Activated CD8-positive, alpha-beta T cell treated with anti-CD3 and anti-CD28 coated beads for 36 hours (primary cell): ENCODE measurements at regions of chr15 and their contacts with region 1.

Region 1: GRCh38 chr15:85296615-85297402 is 83.6 kb upstream of the AKAP13 start:
- DNase-seq: peak; percentile 82
- ATAC-seq: peak; percentile 100
- H3K4me3 Mint-ChIP-seq: peak overlapping the region; percentile 36
- H3K27ac Mint-ChIP-seq: no peak overlapping the region
- H3K4me1 Mint-ChIP-seq: peaks cover 13% of the 10 kb centered on the region
- H3K27me3 Mint-ChIP-seq: no peaks in the 10 kb centered on the region
- CTCF ChIP-seq: peak; percentile 88

Region 2: GRCh38 chr15:84402856-84403608 is 893.8 kb before region 1 on chr15:
- CTCF ChIA-PET with region 1: no interaction called
- POLR2A ChIA-PET with region 1: no interaction called
- intact Hi-C with region 1: no loop called
- DNase-seq: no peak
- ATAC-seq: no peak
- H3K4me3 Mint-ChIP-seq: no peak overlapping the region
- H3K27ac Mint-ChIP-seq: no peak overlapping the region
- H3K4me1 Mint-ChIP-seq: no peaks in the 10 kb centered on the region
- H3K27me3 Mint-ChIP-seq: no peaks in the 10 kb centered on the region
- CTCF ChIP-seq: no peak

Region 3: GRCh38 chr15:85318048-85318731 is 21.4 kb after region 1 on chr15:
- CTCF ChIA-PET with region 1: interaction called, 21 read pairs
- POLR2A ChIA-PET with region 1: interaction called, 3 read pairs
- intact Hi-C with region 1: no loop called
- DNase-seq: peak; percentile 75
- ATAC-seq: peak; percentile 88
- H3K4me3 Mint-ChIP-seq: peak overlapping the region; percentile 12
- H3K27ac Mint-ChIP-seq: peak overlapping the region; percentile 85
- H3K4me1 Mint-ChIP-seq: peaks cover 54% of the 10 kb centered on the region
- H3K27me3 Mint-ChIP-seq: no peaks in the 10 kb centered on the region
- CTCF ChIP-seq: no peak

Region 4: DNA sequence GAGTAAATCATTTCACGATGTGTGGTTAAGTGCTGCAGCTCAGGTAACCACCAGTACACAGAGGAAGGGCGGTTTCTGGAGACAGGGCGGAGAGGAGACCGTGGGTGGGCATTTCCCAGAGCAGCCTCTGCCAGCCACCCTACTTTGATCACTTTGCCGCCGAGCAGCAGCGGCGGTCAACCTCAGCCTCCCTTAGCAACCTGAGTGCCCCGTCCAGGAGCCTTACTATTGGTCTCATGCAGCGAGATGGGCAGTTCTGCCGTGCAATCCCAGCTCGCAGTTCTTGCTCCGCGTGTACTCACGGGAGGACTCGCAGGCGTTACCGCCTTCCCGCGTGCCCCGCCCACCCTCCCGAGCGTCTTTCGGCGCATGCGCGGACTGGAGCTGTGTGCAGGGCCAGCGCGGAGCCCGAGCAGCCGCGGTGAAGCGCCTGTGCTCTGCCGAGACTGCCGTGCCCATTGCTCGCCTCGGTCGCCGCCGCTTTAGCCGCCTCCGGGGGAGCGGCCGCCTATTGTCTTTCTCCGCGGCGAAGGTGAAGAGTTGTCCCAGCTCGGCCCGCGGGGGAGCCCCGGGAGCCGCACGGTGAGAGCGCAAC is 83.5 kb after region 1 on chr15 and contains the start of gene AKAP13:
- CTCF ChIA-PET with region 1: interaction called, 11 read pairs
- POLR2A ChIA-PET with region 1: no interaction called
- intact Hi-C with region 1: no loop called
- DNase-seq: peak; percentile 98
- ATAC-seq: peak; percentile 89
- H3K4me3 Mint-ChIP-seq: peak within 1 kb of the TSS; percentile 83
- H3K27ac Mint-ChIP-seq: peak within 1 kb of the TSS; percentile 90
- H3K4me1 Mint-ChIP-seq: peaks cover 42% of the 10 kb centered on the region
- H3K27me3 Mint-ChIP-seq: no peaks in the 10 kb centered on the region
- CTCF ChIP-seq: no peak
- total RNA-seq, gene AKAP13: 79.1 to 79.5 TPM

Region 5: DNA sequence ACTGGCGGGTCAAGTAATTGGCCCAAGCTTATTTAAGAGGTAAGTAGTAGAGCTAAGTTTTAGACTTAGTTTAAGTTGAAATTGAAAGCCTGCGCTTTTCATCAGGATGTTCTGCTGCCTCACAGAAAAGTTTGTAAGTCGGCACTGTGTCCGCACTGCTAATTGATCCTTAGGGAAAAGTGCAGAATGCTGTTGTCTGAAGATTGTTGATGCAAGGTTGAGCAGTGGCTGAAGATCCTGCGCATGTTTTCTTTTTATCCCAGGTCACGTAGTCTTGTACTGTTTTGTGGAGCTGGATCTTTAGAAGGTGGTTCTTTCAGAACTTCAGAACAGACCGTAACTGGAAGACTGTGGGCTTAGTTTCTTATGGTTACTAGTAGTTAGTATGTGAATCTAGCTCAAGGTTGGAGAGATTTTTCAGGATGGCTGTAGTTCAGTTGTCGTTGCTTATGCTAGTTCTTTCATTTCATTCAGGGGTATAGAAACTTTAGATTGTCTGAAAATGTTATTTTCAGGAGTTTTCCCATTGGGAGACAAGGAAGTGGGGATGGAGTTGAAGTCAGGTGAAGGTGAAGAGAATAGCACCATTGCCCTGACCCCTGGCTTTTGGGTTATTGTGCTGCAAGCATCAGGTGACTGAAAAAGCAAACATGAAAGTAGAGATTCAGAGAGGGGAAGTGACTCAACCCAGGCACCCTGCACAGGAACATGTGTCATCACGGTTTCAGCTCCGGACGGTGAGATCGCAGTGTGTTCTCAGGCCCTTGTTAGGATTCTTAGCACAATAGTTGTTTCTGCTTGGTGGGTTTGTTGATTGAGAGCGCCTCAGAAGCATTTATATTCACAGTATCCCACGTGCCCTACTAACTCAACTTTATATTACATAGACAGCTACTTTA is 116.4 kb after region 1 on chr15:
- CTCF ChIA-PET with region 1: interaction called, 90 read pairs
- POLR2A ChIA-PET with region 1: no interaction called
- intact Hi-C with region 1: loop called (anchors 1 kb)
- DNase-seq: peak; percentile 91
- ATAC-seq: peak; percentile 98
- H3K4me3 Mint-ChIP-seq: peak overlapping the region; percentile 40
- H3K27ac Mint-ChIP-seq: peak overlapping the region; percentile 79
- H3K4me1 Mint-ChIP-seq: peaks cover 69% of the 10 kb centered on the region
- H3K27me3 Mint-ChIP-seq: no peaks in the 10 kb centered on the region
- CTCF ChIP-seq: no peak

Region 6: GRCh38 chr15:85504749-85505676 is 208.2 kb after region 1 on chr15:
- CTCF ChIA-PET with region 1: interaction called, 24 read pairs
- POLR2A ChIA-PET with region 1: no interaction called
- intact Hi-C with region 1: loop called (anchors 10 kb)
- DNase-seq: peak; percentile 68
- ATAC-seq: peak; percentile 67
- H3K4me3 Mint-ChIP-seq: no peak overlapping the region
- H3K27ac Mint-ChIP-seq: no peak overlapping the region
- H3K4me1 Mint-ChIP-seq: peaks cover 53% of the 10 kb centered on the region
- H3K27me3 Mint-ChIP-seq: no peaks in the 10 kb centered on the region
- CTCF ChIP-seq: peak; percentile 68